AG04449 (cell line): ENCODE measurements at regions of chr3 and their contacts with region 1.

Region 1: GRCh38 chr3:32414520-32415202 is 23.0 kb downstream of the CMTM7 start:
- DNase-seq: no peak
- H3K4me3 ChIP-seq: no peak overlapping the region
- CTCF ChIP-seq: no peak

Region 2: DNA sequence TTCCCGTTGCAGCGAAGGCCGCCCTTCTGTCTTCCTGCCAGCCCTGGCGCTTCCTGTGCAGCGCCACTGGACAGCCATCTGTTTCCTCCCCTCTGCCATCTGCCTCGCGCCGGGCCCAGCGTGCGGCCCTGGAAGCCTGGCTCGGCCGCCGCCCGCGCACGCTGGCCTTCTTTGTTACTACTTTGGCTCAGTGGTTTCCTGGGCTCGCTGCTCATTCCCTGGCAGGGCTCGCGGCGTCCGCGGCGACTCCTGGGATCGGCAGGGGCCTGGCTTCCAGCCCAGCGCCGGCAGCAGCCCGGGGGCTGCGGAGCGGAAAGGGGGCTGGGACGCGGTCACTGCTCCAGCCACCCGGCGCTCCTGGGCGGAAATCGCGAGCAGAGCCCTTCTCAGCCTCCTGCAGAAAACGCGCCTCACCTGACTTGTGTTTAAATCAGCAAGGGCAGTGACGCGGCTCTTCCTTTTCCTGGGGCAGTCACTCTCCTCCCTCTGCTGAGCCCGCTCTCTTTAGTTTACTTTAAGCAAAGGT is 13.0 kb before region 1 on chr3:
- CTCF ChIA-PET with region 1: interaction called, 13 read pairs
- POLR2A ChIA-PET with region 1: no interaction called
- DNase-seq: no peak
- H3K4me3 ChIP-seq: peak overlapping the region; percentile 44
- CTCF ChIP-seq: no peak

Region 3: DNA sequence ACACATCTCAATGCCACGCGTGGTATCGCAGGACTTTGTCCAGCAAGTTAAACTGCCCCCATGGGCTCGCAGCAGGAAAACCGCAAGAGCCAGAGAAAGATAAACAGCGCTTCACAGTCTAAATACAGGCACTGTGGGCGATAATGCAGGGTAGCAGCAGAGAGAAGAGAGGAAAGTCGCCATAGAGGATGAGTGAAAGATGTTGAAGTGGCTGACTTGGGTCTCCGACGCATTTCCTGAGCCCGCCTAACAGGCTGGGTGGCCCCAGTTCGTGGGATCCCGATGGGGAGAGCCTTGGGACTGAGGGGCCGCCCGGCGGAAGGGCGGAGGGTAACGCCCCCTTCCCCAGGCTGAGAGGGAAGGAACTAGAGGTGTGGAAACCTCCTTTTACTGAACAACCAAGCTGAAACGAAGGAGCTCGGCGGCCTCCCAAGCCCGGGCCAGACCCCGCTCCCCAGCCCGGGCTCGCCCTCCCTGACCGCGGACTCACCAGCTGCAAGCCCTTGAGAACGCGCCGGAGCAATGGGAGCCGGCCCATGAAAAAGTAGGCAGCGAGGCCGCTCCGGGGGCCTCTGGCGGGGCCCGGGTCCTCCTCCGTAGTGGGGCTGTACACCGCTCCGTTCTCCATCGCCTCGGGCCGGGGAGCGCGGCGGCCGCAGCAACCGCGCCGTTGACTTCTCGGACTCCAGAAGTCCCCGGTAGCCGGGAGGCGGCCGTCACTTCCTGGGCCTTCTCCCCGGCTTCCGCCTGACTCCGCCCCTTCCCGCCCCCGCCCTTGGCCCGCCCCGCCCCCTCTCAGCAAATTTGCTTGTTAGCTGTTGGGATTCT is 87.7 kb after region 1 on chr3 and contains the start of gene CMTM6:
- CTCF ChIA-PET with region 1: no interaction called
- POLR2A ChIA-PET with region 1: no interaction called
- DNase-seq: peak; percentile 21
- H3K4me3 ChIP-seq: peak within 1 kb of the TSS; percentile 89
- CTCF ChIP-seq: no peak

Region 4: GRCh38 chr3:32882603-32883025 is 468.0 kb after region 1 on chr3:
- CTCF ChIA-PET with region 1: no interaction called
- POLR2A ChIA-PET with region 1: no interaction called
- DNase-seq: no peak
- H3K4me3 ChIP-seq: no peak overlapping the region
- CTCF ChIP-seq: no peak